AG04450 (cell line): ENCODE measurements at regions of chr3 and their contacts with region 1.

Region 1: DNA sequence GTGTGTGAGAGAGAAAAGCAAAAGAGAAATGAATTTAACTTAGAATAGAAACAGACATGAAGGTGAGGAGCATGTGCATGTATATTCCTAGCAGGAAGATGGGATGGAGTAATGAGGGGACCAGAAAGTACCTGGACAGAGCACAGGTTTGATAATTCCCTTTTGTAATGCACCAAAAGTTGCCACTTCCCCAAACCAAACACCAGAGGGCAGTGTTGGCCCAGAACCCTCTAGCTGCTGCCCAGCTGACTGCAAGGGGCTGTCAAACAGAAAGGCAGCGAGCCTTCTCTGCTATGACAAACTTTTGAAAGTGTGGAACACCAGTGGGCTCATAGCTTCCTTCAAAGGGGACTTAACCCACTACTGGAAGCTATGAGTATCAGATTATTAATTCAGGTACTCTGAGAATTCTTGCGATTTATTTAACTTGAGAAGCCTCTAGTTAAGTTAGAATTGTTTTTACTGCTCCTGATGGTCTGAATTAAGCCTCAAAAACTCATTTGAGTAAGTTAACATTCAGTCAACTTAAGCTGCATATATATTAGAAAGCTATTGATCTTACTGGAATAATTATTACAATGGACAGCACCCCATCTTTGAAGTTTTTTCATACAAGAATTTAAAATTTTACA is 234.9 kb downstream of the NEK10 start:
- DNase-seq: peak; percentile 42
- H3K4me3 ChIP-seq: no peak overlapping the region
- H3K27ac ChIP-seq: no peak overlapping the region
- H3K27me3 ChIP-seq: no peaks in the 10 kb centered on the region
- CTCF ChIP-seq: peak; percentile 93

Region 2: GRCh38 chr3:27147215-27147614 is 12.9 kb after region 1 on chr3:
- CTCF ChIA-PET with region 1: interaction called, 19 read pairs
- POLR2A ChIA-PET with region 1: no interaction called
- DNase-seq: no peak
- H3K4me3 ChIP-seq: no peak overlapping the region
- H3K27ac ChIP-seq: no peak overlapping the region
- H3K27me3 ChIP-seq: no peaks in the 10 kb centered on the region
- CTCF ChIP-seq: no peak

Region 3: DNA sequence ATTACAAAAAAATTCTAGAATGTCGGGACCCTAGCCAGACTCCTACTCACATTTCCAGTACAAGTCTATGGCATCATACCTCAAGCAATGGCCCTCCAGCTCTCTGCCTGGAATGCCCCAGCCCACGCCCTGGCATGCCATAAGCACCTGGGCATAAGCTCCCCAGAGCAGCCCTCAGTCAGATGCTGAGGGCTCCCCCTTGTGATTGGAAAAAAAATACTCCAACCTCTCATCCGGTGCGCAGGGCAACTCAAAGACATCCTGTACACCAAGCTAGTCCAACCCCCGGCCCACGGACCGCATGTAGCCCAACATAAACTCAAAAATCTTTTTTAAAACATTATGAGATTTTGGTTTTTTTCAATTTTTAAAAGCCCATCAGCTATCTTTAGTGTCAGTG is 119.5 kb after region 1 on chr3:
- CTCF ChIA-PET with region 1: interaction called, 202 read pairs
- POLR2A ChIA-PET with region 1: no interaction called
- DNase-seq: no peak
- H3K4me3 ChIP-seq: no peak overlapping the region
- H3K27ac ChIP-seq: no peak overlapping the region
- H3K27me3 ChIP-seq: no peaks in the 10 kb centered on the region
- CTCF ChIP-seq: peak; percentile 60

Region 4: DNA sequence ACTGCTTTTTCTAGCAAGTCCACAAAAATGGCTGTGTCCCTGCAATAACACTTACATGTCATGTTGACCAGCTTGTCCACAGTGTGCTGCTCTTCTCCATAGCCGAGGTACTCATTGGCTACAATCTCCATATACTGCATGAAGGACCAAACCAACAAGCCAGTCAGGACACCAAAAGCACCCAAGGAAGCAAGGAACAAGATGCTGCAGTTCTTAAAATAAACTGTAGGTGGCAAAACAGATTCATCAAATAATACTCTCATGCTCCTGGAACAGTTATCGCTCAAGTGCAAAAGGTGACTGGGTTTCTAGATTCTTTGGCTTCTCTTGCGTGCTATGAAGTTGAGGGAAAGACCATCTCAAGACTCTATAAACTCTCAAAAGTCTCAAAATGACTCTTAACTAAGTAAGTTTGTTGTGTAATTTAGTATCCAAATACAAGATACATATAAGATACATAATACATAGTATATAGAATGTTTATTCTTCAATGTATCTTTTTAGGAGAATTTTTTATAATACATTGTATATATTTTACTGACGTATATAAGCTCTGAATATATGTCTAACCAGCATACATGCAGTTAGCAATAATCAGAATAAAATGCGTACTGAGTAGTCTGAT is 177.9 kb after region 1 on chr3:
- CTCF ChIA-PET with region 1: interaction called, 12 read pairs
- POLR2A ChIA-PET with region 1: no interaction called
- DNase-seq: peak; percentile 42
- H3K4me3 ChIP-seq: no peak overlapping the region
- H3K27ac ChIP-seq: no peak overlapping the region
- H3K27me3 ChIP-seq: no peaks in the 10 kb centered on the region
- CTCF ChIP-seq: peak; percentile 78

Region 5: GRCh38 chr3:28244491-28244890 is 1110.2 kb after region 1 on chr3:
- CTCF ChIA-PET with region 1: interaction called, 10 read pairs
- POLR2A ChIA-PET with region 1: no interaction called
- DNase-seq: no peak
- H3K4me3 ChIP-seq: no peak overlapping the region
- H3K27ac ChIP-seq: no peak overlapping the region
- H3K27me3 ChIP-seq: no peaks in the 10 kb centered on the region
- CTCF ChIP-seq: no peak